ENCODE measurements at regions of chr5 and their contacts with region 1.

Region 1: GRCh38 chr5:34533582-34534522 is 122.3 kb upstream of the RAI14 start:
- DNase-seq: peak; percentile 60
- H3K4me3 Mint-ChIP-seq: no peak overlapping the region
- H3K27ac Mint-ChIP-seq: peak overlapping the region; percentile 87
- H3K4me1 Mint-ChIP-seq: peaks cover 40% of the 10 kb centered on the region
- H3K27me3 Mint-ChIP-seq: peaks cover 5% of the 10 kb centered on the region

Region 2: DNA sequence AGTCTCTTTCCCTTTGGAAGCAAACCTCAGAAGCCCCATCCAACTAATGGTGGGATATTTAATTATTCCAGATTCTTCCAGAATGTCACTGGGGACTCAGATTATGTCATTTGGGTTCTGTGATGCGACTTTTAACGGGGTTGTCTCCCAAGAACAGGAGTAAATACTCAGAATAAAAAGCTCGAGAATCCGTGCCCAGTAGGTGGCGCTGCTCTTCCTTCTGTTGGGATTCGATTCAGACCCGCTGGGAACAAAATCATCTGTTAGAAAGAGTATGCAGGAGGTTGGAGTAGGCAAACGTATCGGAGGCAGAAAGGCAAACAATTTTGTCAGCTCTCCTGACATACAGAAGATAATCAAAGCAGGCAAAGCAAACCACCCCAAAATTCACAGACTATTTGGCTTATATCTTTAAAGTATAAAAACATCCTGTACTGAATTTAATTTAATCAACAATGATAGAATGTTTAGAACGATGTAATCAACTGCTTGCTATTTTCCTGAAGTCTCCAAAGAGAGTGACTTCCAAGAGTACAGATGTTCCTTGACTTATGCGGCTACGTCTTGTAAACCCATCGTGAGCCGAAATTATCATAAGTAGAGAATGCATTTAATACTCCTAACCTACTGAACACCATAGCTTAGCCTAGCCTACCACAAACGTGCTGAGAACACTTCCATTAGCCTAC is 47.5 kb before region 1 on chr5:
- CTCF ChIA-PET with region 1: interaction called, 17 read pairs
- intact Hi-C with region 1: loop called (anchors 1 kb)
- DNase-seq: peak; percentile 87
- H3K4me3 Mint-ChIP-seq: no peak overlapping the region
- H3K27ac Mint-ChIP-seq: no peak overlapping the region
- H3K4me1 Mint-ChIP-seq: no peaks in the 10 kb centered on the region
- H3K27me3 Mint-ChIP-seq: peaks cover 29% of the 10 kb centered on the region

Region 3: GRCh38 chr5:34522599-34523386 is 11.1 kb before region 1 on chr5:
- CTCF ChIA-PET with region 1: interaction called, 19 read pairs
- intact Hi-C with region 1: loop called (anchors 1 kb)
- DNase-seq: peak; percentile 73
- H3K4me3 Mint-ChIP-seq: no peak overlapping the region
- H3K27ac Mint-ChIP-seq: no peak overlapping the region
- H3K4me1 Mint-ChIP-seq: peaks cover 4% of the 10 kb centered on the region
- H3K27me3 Mint-ChIP-seq: peaks cover 3% of the 10 kb centered on the region

Region 4: GRCh38 chr5:34621277-34622097 is 87.6 kb after region 1 on chr5:
- CTCF ChIA-PET with region 1: no interaction called
- intact Hi-C with region 1: loop called (anchors 5 kb)
- DNase-seq: no peak
- H3K4me3 Mint-ChIP-seq: no peak overlapping the region
- H3K27ac Mint-ChIP-seq: no peak overlapping the region
- H3K4me1 Mint-ChIP-seq: peaks cover 41% of the 10 kb centered on the region
- H3K27me3 Mint-ChIP-seq: peaks cover 14% of the 10 kb centered on the region

Region 5: DNA sequence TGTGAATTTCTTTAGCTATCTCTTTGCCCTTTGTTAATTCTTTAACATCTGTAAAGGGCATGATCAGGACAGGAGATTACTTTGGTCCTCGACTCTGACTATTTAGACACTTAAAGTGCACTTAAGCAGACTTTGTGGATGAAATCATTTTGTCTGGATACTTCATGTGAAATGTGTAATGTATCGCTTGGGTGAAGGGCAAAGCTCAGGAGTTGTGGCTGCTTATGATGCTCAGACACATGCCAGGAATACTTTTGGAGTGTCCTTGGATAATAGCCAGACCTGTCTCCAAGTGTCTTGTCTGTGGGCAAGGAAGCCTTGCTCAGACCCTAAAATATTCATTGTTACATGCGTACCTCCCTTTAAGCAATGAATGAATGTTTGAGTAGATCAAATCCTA is 210.0 kb after region 1 on chr5:
- CTCF ChIA-PET with region 1: no interaction called
- intact Hi-C with region 1: no loop called
- DNase-seq: no peak
- H3K4me3 Mint-ChIP-seq: no peak overlapping the region
- H3K27ac Mint-ChIP-seq: no peak overlapping the region
- H3K4me1 Mint-ChIP-seq: no peaks in the 10 kb centered on the region
- H3K27me3 Mint-ChIP-seq: peaks cover 5% of the 10 kb centered on the region

Region 6: DNA sequence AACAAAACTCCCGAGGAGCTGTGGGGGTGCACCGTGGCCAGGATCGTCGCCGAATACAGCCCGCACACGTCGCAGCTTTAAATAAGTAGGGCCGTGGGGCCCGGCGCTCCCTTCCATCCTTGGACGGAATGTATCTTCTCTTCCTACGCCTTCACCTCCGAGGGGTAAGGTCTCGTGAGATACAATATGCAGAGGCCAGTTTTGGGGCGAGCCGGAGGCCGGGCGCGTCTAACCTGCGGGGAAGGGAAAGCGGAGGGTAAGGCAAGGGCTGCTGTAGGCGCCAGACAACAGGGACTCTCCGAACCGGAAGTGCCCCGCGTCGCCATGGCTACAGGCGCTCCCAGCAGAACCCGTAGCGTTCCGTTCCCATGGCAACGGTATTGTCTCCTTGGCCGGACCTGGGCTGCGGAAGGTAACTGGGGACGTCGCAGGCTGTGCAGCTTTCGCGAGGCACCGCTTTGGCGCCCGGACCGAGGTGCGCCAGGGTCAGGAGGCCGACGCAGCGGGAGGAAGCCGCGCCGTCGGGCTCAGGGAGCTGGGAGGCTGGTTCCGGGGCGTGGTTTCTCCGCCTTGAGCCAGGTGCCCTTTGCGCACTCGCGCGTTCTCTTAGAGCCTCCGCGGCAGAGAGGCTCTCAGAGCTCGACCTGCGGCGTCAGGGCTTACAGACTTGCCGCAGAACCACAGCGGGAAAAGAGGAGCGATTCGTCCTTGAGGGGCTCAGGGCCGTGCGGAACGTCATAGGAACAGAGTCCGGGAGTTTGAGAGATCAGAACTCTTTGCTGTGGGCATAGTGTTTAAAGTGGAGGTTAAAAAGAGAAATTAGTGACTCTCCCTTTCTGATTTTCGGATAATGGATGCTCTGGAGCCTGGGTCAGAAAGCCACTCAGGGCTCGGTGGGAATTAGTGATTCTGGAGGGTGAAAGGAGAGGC is 305.2 kb after region 1 on chr5 and contains the start of gene TTC23L:
- CTCF ChIA-PET with region 1: no interaction called
- intact Hi-C with region 1: loop called (anchors 2 kb)
- DNase-seq: peak; percentile 94
- H3K4me3 Mint-ChIP-seq: peak within 1 kb of the TSS; percentile 88
- H3K27ac Mint-ChIP-seq: peak within 1 kb of the TSS; percentile 75
- H3K4me1 Mint-ChIP-seq: peaks cover 11% of the 10 kb centered on the region
- H3K27me3 Mint-ChIP-seq: no peaks in the 10 kb centered on the region
- total RNA-seq, gene TTC23L: 0.42 to 0.43 TPM

Region 7: DNA sequence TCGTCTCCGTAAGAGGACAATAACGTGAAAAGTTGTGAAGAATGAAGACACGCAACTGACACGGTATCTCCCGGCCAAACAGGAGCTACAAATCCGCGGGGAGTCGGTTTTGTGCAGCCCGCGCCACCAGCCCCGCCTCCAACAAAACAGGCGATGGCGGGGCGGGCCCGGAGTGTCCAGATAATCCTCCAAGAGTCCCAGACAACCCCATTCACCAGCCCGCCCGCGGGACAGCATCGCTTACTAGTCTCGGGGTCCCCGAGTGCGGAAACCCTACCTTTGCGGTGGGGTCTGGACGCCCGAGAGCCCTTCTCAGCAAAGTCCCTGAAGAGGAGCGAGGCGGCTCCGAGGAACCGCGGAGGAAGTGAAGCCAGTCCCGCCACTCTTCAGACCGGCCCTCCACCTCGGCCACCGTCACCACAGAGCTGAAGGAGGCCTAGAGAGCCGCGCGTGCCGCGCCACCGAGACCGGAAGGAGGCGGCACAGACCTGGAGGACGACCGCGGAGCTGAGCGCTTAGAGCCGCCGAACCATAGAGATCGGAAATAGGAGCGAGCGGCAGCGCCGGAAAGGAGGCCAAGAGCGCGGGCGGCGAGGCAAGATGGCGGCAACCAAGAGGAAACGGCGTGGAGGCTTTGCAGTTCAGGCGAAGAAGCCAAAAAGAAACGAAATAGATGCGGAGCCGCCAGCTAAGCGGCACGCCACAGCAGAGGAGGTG is 381.4 kb after region 1 on chr5 and contains the starts of genes BRIX1 and RAD1:
- CTCF ChIA-PET with region 1: no interaction called
- intact Hi-C with region 1: loop called (anchors 5 kb)
- DNase-seq: peak; percentile 97
- H3K4me3 Mint-ChIP-seq: no peak within 1 kb of the TSS
- H3K27ac Mint-ChIP-seq: peak within 1 kb of the TSS; percentile 52
- H3K4me1 Mint-ChIP-seq: peaks cover 32% of the 10 kb centered on the region
- H3K27me3 Mint-ChIP-seq: no peaks in the 10 kb centered on the region
- total RNA-seq, gene BRIX1: 66.5 to 69.0 TPM
- total RNA-seq, gene RAD1: 38.8 to 40.7 TPM

Region 8: GRCh38 chr5:35838370-35839042 is 1304.7 kb after region 1 on chr5:
- CTCF ChIA-PET with region 1: no interaction called
- intact Hi-C with region 1: loop called (anchors 10 kb)
- DNase-seq: no peak
- H3K4me3 Mint-ChIP-seq: no peak overlapping the region
- H3K27ac Mint-ChIP-seq: peak overlapping the region; percentile 95
- H3K4me1 Mint-ChIP-seq: peaks cover 74% of the 10 kb centered on the region
- H3K27me3 Mint-ChIP-seq: no peaks in the 10 kb centered on the region

Measured in activated naive CD4-positive, alpha-beta T cell treated with anti-CD3 and anti-CD28 coated beads for 36 hours (primary cell).